Right ventricle myocardium superior (tissue), 1 donor: ENCODE measurements at regions of chr1 and their contacts with region 1.

Region 1: GRCh38 chr1:100351095-100351891 is 1.0 kb upstream of the CDC14A start:
- DNase-seq: peak; percentile 93
- ATAC-seq: peak; percentile 82

Region 2: GRCh38 chr1:100219883-100220282 is 131.4 kb before region 1 on chr1:
- intact Hi-C with region 1: no loop called
- DNase-seq: no peak
- ATAC-seq: no peak

Region 3: GRCh38 chr1:100277866-100278265 is 73.4 kb before region 1 on chr1:
- intact Hi-C with region 1: loop called (anchors 5 kb)
- DNase-seq: no peak
- ATAC-seq: no peak

Region 4: DNA sequence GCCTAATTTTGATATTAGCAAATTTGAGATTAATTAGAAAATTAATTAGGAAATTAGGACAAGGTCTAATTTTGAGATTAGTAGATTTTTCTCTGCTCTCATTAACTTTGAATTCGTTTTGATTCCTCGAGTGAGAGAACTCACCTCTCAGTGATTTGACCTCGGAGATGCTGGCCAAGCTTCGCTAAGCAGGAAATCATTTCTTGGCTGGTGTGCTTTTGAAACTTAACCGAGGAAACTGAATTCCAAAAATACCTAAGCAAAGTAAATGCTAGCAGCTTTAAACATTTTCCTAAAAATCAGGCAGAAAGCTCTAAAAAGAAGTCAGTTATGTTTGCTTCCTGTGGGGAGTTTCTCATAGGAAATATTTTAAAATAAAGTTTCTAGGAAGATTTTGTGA is 35.9 kb after region 1 on chr1:
- intact Hi-C with region 1: no loop called
- DNase-seq: no peak
- ATAC-seq: no peak

Region 5: GRCh38 chr1:100459358-100460114 is 108.2 kb after region 1 on chr1:
- intact Hi-C with region 1: loop called (anchors 10 kb)
- DNase-seq: peak; percentile 78
- ATAC-seq: peak; percentile 90